ENCODE measurements at regions of chr2 and their contacts with region 1.

Region 1: DNA sequence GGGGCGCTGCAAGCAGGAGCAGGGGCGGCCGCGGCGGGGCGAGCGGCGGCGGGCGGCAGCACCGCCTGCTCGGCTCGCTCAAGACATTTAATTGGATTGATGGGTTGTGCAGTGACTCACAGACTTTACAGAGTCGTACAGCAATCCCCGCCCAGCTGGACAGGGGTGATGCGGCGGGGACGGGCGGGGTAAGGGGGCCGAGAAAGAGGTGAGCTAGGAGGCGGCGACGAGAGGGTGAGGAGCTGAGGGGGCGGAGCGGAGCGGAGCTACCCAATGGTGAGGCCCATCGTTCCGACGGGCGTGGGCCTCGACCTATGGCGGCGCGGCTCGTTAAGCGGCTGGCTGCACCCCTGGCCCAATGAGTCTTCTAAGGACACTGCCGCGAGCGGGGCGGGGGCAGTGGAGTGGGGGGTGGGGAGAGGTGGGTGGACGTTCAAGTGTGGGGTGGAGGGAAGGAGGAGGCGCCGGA is 97.1 kb upstream of the SERTAD2 start:
- DNase-seq: peak; percentile 95 to 100 (median 97)
- ATAC-seq: peak; percentile 81
- H3K4me3 ChIP-seq: peak overlapping the region; percentile 86 to 99
- H3K4me3 Mint-ChIP-seq: peak overlapping the region; percentile 99
- H3K27ac ChIP-seq: peak overlapping the region; percentile 88 to 95
- H3K27ac Mint-ChIP-seq: peak overlapping the region; percentile 95
- H3K4me1 ChIP-seq: peaks cover 19% of the 10 kb centered on the region
- H3K4me1 Mint-ChIP-seq: peaks cover 31% of the 10 kb centered on the region
- H3K27me3 ChIP-seq: no peaks in the 10 kb centered on the region
- H3K27me3 Mint-ChIP-seq: no peaks in the 10 kb centered on the region
- CTCF ChIP-seq: no peak

Region 2: GRCh38 chr2:64023485-64024258 is 727.2 kb before region 1 on chr2:
- CTCF ChIA-PET with region 1: no interaction called
- POLR2A ChIA-PET with region 1: no interaction called
- intact Hi-C with region 1: no loop called
- DNase-seq: no peak
- ATAC-seq: no peak
- H3K4me3 ChIP-seq: no peak overlapping the region
- H3K4me3 Mint-ChIP-seq: no peak overlapping the region
- H3K27ac ChIP-seq: no peak overlapping the region
- H3K27ac Mint-ChIP-seq: no peak overlapping the region
- H3K4me1 ChIP-seq: peaks cover 23% of the 10 kb centered on the region
- H3K4me1 Mint-ChIP-seq: peaks cover 34% of the 10 kb centered on the region
- H3K27me3 ChIP-seq: no peaks in the 10 kb centered on the region
- H3K27me3 Mint-ChIP-seq: no peaks in the 10 kb centered on the region
- CTCF ChIP-seq: no peak

Region 3: DNA sequence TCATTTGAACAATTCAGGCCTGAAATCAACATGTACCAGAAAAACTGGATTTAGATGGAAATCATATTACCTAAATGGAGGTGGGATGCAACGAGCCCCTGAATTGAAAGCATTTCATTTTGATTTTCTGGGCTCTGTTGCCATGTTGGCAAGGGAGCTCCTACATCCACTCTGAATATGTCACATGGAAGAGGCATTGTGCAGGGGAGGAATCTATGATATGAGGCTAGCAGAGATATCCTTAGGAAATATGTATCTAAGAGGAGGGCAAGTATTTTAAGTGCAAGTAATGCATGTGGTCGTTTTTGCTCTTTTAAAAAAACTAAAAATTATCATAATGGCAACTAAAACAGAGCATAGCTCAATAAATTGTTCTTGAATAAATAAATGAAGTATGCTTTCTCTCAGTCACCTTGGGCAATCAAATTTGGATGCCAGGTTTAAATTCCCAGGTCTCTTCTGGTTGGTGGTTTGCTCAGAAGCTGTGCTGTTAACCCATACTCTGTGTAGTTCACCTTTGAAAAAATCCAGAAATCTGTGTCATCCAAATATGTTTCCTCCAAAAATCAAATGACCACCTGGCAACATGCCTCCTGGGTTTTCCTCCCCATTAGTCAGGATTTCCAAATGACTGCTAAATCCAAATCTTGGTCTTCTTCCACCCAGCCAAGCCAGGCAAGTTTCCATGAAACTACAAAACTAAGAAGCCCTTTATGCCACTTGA is 303.4 kb before region 1 on chr2:
- CTCF ChIA-PET with region 1: no interaction called
- POLR2A ChIA-PET with region 1: no interaction called
- intact Hi-C with region 1: no loop called
- DNase-seq: no peak
- ATAC-seq: no peak
- H3K4me3 ChIP-seq: no peak overlapping the region
- H3K4me3 Mint-ChIP-seq: no peak overlapping the region
- H3K27ac ChIP-seq: no peak overlapping the region
- H3K27ac Mint-ChIP-seq: no peak overlapping the region
- H3K4me1 ChIP-seq: no peaks in the 10 kb centered on the region
- H3K4me1 Mint-ChIP-seq: no peaks in the 10 kb centered on the region
- H3K27me3 ChIP-seq: peaks cover 0 to 3% of the 10 kb centered on the region in 2 experiments
- H3K27me3 Mint-ChIP-seq: peaks cover 9% of the 10 kb centered on the region
- CTCF ChIP-seq: no peak

Region 4: GRCh38 chr2:64711252-64711800 is 39.5 kb before region 1 on chr2:
- CTCF ChIA-PET with region 1: interaction called, 4 read pairs
- POLR2A ChIA-PET with region 1: interaction called, 7 read pairs
- intact Hi-C with region 1: loop called in 1 of 2 experiments (anchors 5 kb)
- DNase-seq: peak in 1 of 9 experiments; percentile 35
- ATAC-seq: peak; percentile 52
- H3K4me3 ChIP-seq: no peak overlapping the region
- H3K4me3 Mint-ChIP-seq: peak overlapping the region; percentile 16
- H3K27ac ChIP-seq: no peak overlapping the region
- H3K27ac Mint-ChIP-seq: peak overlapping the region; percentile 10
- H3K4me1 ChIP-seq: peaks cover 16% of the 10 kb centered on the region
- H3K4me1 Mint-ChIP-seq: peaks cover 20% of the 10 kb centered on the region
- H3K27me3 ChIP-seq: no peaks in the 10 kb centered on the region
- H3K27me3 Mint-ChIP-seq: no peaks in the 10 kb centered on the region
- CTCF ChIP-seq: no peak

Region 5: GRCh38 chr2:64762301-64762997 is 11.6 kb after region 1 on chr2:
- CTCF ChIA-PET with region 1: interaction called, 6 read pairs
- POLR2A ChIA-PET with region 1: interaction called, 30 read pairs
- intact Hi-C with region 1: loop called (anchors 1 kb)
- DNase-seq: no peak
- ATAC-seq: no peak
- H3K4me3 ChIP-seq: no peak overlapping the region
- H3K4me3 Mint-ChIP-seq: no peak overlapping the region
- H3K27ac ChIP-seq: no peak overlapping the region
- H3K27ac Mint-ChIP-seq: no peak overlapping the region
- H3K4me1 ChIP-seq: peaks cover 4% of the 10 kb centered on the region
- H3K4me1 Mint-ChIP-seq: peaks cover 9% of the 10 kb centered on the region
- H3K27me3 ChIP-seq: no peaks in the 10 kb centered on the region
- H3K27me3 Mint-ChIP-seq: no peaks in the 10 kb centered on the region
- CTCF ChIP-seq: no peak

Region 6: GRCh38 chr2:64819774-64820696 is 69.2 kb after region 1 on chr2:
- CTCF ChIA-PET with region 1: interaction called, 4 read pairs
- POLR2A ChIA-PET with region 1: interaction called, 19 read pairs
- intact Hi-C with region 1: loop called in 1 of 2 experiments (anchors 1 kb)
- DNase-seq: peak in 8 of 9 experiments; percentile 39 to 82 (median 56)
- ATAC-seq: peak; percentile 98
- H3K4me3 ChIP-seq: peak overlapping the region; percentile 12 to 36
- H3K4me3 Mint-ChIP-seq: peak overlapping the region; percentile 73
- H3K27ac ChIP-seq: peak overlapping the region; percentile 60 to 72
- H3K27ac Mint-ChIP-seq: peak overlapping the region; percentile 93
- H3K4me1 ChIP-seq: peaks cover 28% of the 10 kb centered on the region
- H3K4me1 Mint-ChIP-seq: peaks cover 40% of the 10 kb centered on the region
- H3K27me3 ChIP-seq: no peaks in the 10 kb centered on the region
- H3K27me3 Mint-ChIP-seq: no peaks in the 10 kb centered on the region
- CTCF ChIP-seq: no peak

Region 7: GRCh38 chr2:64865073-64865830 is 114.4 kb after region 1 on chr2:
- CTCF ChIA-PET with region 1: interaction called, 8 read pairs
- POLR2A ChIA-PET with region 1: no interaction called
- intact Hi-C with region 1: loop called in 1 of 2 experiments (anchors 1 kb)
- DNase-seq: peak; percentile 39 to 84 (median 55)
- ATAC-seq: peak; percentile 91
- H3K4me3 ChIP-seq: peak overlapping the region; percentile 61 to 76
- H3K4me3 Mint-ChIP-seq: peak overlapping the region; percentile 81
- H3K27ac ChIP-seq: no peak overlapping the region
- H3K27ac Mint-ChIP-seq: no peak overlapping the region
- H3K4me1 ChIP-seq: peaks cover 13% of the 10 kb centered on the region
- H3K4me1 Mint-ChIP-seq: no peaks in the 10 kb centered on the region
- H3K27me3 ChIP-seq: peaks cover 0 to 2% of the 10 kb centered on the region in 2 experiments
- H3K27me3 Mint-ChIP-seq: peaks cover 4% of the 10 kb centered on the region
- CTCF ChIP-seq: peak; percentile 80

Region 8: GRCh38 chr2:65227425-65228262 is 476.8 kb after region 1 on chr2 and contains the start of gene ACTR2:
- CTCF ChIA-PET with region 1: no interaction called
- POLR2A ChIA-PET with region 1: no interaction called
- intact Hi-C with region 1: loop called in 1 of 2 experiments (anchors 5 kb)
- DNase-seq: peak; percentile 87 to 98 (median 94)
- ATAC-seq: peak; percentile 94
- H3K4me3 ChIP-seq: peak within 1 kb of the TSS; percentile 74 to 89
- H3K4me3 Mint-ChIP-seq: peak within 1 kb of the TSS; percentile 99
- H3K27ac ChIP-seq: peak within 1 kb of the TSS; percentile 94 to 98
- H3K27ac Mint-ChIP-seq: peak within 1 kb of the TSS; percentile 99
- H3K4me1 ChIP-seq: peaks cover 43% of the 10 kb centered on the region
- H3K4me1 Mint-ChIP-seq: peaks cover 47% of the 10 kb centered on the region
- H3K27me3 ChIP-seq: no peaks in the 10 kb centered on the region
- H3K27me3 Mint-ChIP-seq: no peaks in the 10 kb centered on the region
- CTCF ChIP-seq: no peak
- total RNA-seq, gene ACTR2: 101 to 117 TPM

Measured in CD8-positive, alpha-beta T cell (primary cell).